ENCODE measurements at regions of chr20 and their contacts with region 1.

Region 1: GRCh38 chr20:5442101-5442500 is 125.3 kb upstream of the PROKR2 start:
- DNase-seq: no peak
- ATAC-seq: no peak
- H3K4me3 ChIP-seq: no peak overlapping the region
- H3K27ac ChIP-seq: no peak overlapping the region
- H3K4me1 ChIP-seq: no peaks in the 10 kb centered on the region
- H3K27me3 ChIP-seq: peaks cover 4% of the 10 kb centered on the region; the same call in 1 of the 2 replicates
- CTCF ChIP-seq: no peak
- POLR2A ChIP-seq: no peak
- RAD21 ChIP-seq: no peak

Region 2: DNA sequence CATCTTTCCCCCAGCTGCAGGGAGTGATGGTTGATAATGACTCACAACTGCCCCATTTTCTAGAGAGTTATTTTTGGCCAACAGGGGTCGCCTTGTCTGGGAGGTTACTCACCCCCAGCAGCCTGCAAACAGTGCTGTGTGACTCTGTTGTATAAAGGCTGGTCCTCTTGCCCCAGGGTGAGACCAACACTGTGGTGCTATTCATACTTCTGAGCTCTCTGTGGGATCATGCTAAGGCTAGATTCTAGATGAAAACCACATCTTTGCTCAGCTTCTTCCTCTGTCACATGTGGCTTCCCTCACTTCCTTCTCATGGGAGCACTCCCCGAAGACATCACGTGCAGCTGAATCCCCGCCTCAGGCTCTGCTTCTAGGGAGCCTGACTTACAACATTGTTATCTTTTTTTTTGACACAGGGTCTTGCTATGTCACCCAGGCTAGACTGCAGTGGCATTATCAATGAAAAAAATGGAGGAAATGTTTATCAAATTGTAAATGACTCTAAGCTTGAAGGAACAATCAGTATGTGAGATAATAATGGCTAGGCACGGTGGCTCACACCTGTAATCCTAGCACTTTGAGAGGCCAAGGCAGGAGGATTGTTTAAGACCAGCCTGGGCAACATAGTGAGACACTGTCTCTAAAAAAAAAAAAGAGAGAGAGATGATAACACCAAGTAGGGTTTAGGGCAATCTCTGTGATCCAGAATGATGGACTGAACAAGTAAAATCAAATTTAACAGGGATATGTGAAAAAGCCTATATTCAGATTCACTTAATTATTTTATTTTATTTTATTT is 385.1 kb before region 1 on chr20:
- CTCF ChIA-PET with region 1: no interaction called
- POLR2A ChIA-PET with region 1: no interaction called
- RAD21 ChIA-PET with region 1: no interaction called
- intact Hi-C with region 1: no loop called
- DNase-seq: peak; percentile 26
- ATAC-seq: peak; percentile 77
- H3K4me3 ChIP-seq: no peak overlapping the region
- H3K27ac ChIP-seq: no peak overlapping the region
- H3K4me1 ChIP-seq: peaks cover 12 to 30% of the 10 kb centered on the region in 2 experiments
- H3K27me3 ChIP-seq: no peaks in the 10 kb centered on the region
- CTCF ChIP-seq: peak; percentile 49 to 74 (median 68); a peak in 5 of 6 replicates
- POLR2A ChIP-seq: no peak
- RAD21 ChIP-seq: peak; percentile 53

Region 3: DNA sequence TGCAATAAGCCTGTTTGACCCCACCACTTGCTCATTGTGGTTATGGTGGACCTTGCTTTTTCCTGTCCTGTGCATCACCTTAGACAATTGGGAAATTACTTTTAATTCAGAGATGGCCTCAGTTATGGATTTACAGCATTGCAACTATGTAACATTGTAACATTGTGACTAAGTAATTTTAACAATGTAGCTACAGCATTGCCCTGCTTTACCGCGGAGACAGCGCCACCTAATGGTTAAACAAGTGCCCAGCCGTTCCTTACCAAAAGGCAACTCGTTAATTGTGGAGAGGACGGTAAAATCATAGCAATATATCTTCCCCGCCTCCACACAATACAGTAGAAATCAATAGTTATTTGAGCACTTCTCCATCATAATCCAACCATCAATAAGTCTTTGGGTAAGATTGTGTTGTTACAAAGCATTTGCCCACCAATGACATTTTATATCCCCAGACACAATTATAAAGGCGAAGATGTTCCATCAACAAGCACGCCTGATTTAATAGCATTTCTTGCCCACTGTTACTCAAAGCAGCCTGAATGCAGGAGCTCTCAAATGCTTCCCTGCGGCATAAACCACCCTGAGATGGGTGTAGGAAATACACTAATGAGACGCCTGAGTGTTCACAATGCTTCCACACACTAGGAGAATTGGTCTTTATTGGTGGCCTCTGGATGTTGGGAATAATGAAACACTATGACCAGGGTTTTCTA is 219.0 kb before region 1 on chr20:
- CTCF ChIA-PET with region 1: interaction called, 15 read pairs
- POLR2A ChIA-PET with region 1: no interaction called
- RAD21 ChIA-PET with region 1: no interaction called
- intact Hi-C with region 1: loop called (anchors 5 kb)
- DNase-seq: peak; percentile 18
- ATAC-seq: peak; percentile 82
- H3K4me3 ChIP-seq: no peak overlapping the region
- H3K27ac ChIP-seq: no peak overlapping the region
- H3K4me1 ChIP-seq: no peaks in the 10 kb centered on the region
- H3K27me3 ChIP-seq: no peaks in the 10 kb centered on the region
- CTCF ChIP-seq: peak; percentile 65 to 99 (median 94)
- POLR2A ChIP-seq: no peak
- RAD21 ChIP-seq: peak; percentile 80

Region 4: GRCh38 chr20:5234978-5235377 is 207.1 kb before region 1 on chr20:
- CTCF ChIA-PET with region 1: no interaction called
- POLR2A ChIA-PET with region 1: no interaction called
- RAD21 ChIA-PET with region 1: no interaction called
- intact Hi-C with region 1: no loop called
- DNase-seq: no peak
- ATAC-seq: no peak
- H3K4me3 ChIP-seq: no peak overlapping the region
- H3K27ac ChIP-seq: no peak overlapping the region
- H3K4me1 ChIP-seq: no peaks in the 10 kb centered on the region
- H3K27me3 ChIP-seq: peaks cover 6% of the 10 kb centered on the region; the same call in 1 of the 2 replicates
- CTCF ChIP-seq: no peak
- POLR2A ChIP-seq: no peak
- RAD21 ChIP-seq: no peak

Region 5: DNA sequence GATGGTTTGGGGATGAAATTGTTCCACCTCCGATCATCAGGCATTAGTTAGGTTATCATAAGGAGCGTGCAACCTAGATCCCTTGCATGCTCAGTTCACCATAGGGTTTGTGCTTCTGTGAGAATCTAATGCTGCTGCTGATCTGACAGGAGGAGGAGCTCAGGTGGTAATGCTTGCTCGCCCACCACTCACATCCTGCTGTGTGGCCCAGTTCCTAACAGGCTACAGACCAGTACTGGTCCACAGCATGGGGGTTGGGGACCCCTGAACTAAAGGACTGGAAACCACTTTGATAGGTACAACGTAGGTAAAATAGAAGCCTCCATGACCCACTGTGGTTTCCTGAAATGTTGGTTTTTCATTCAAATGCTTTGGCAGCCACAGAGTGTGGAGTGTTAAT is 16.1 kb before region 1 on chr20:
- CTCF ChIA-PET with region 1: interaction called, 4 read pairs
- POLR2A ChIA-PET with region 1: no interaction called
- RAD21 ChIA-PET with region 1: no interaction called
- intact Hi-C with region 1: loop called (anchors 2 kb)
- DNase-seq: no peak
- ATAC-seq: no peak
- H3K4me3 ChIP-seq: no peak overlapping the region
- H3K27ac ChIP-seq: no peak overlapping the region
- H3K4me1 ChIP-seq: no peaks in the 10 kb centered on the region
- H3K27me3 ChIP-seq: no peaks in the 10 kb centered on the region
- CTCF ChIP-seq: no peak
- POLR2A ChIP-seq: no peak
- RAD21 ChIP-seq: no peak

Region 6: GRCh38 chr20:5529331-5530148 is 87.4 kb after region 1 on chr20:
- CTCF ChIA-PET with region 1: no interaction called
- POLR2A ChIA-PET with region 1: no interaction called
- RAD21 ChIA-PET with region 1: no interaction called
- intact Hi-C with region 1: no loop called
- DNase-seq: peak; percentile 47
- ATAC-seq: peak; percentile 91
- H3K4me3 ChIP-seq: no peak overlapping the region
- H3K27ac ChIP-seq: no peak overlapping the region
- H3K4me1 ChIP-seq: peaks cover 0 to 7% of the 10 kb centered on the region in 2 experiments; a peak in 1 of 4 replicates
- H3K27me3 ChIP-seq: no peaks in the 10 kb centered on the region
- CTCF ChIP-seq: peak; percentile 69 to 95 (median 94); a peak in 5 of 6 replicates
- POLR2A ChIP-seq: no peak
- RAD21 ChIP-seq: peak; percentile 85

Measured in HCT116 (cell line).